H1 (cell line): ENCODE measurements at regions of chr16 and their contacts with region 1.

Region 1: GRCh38 chr16:19094541-19095365 is 19.0 kb upstream of the ITPRIPL2 start:
- DNase-seq: no peak
- H3K4me3 ChIP-seq: no peak overlapping the region
- H3K27ac ChIP-seq: no peak overlapping the region
- H3K4me1 ChIP-seq: no peaks in the 10 kb centered on the region
- H3K27me3 ChIP-seq: no peaks in the 10 kb centered on the region; a peak in 1 of 7 replicates
- CTCF ChIP-seq: peak in 1 of 3 experiments; percentile 11; a peak in 1 of 4 replicates
- EP300 ChIP-seq: no peak
- POLR2A ChIP-seq: no peak
- RAD21 ChIP-seq: no peak

Region 2: GRCh38 chr16:19033761-19034160 is 61.0 kb before region 1 on chr16:
- CTCF ChIA-PET with region 1: no interaction called
- POLR2A ChIA-PET with region 1: no interaction called
- DNase-seq: no peak
- H3K4me3 ChIP-seq: no peak overlapping the region
- H3K27ac ChIP-seq: no peak overlapping the region
- H3K4me1 ChIP-seq: no peaks in the 10 kb centered on the region
- H3K27me3 ChIP-seq: no peaks in the 10 kb centered on the region
- CTCF ChIP-seq: no peak
- EP300 ChIP-seq: no peak
- POLR2A ChIP-seq: no peak
- RAD21 ChIP-seq: no peak

Region 3: GRCh38 chr16:19062706-19063105 is 32.0 kb before region 1 on chr16:
- CTCF ChIA-PET with region 1: no interaction called
- POLR2A ChIA-PET with region 1: no interaction called
- DNase-seq: no peak
- H3K4me3 ChIP-seq: no peak overlapping the region
- H3K27ac ChIP-seq: no peak overlapping the region
- H3K4me1 ChIP-seq: no peaks in the 10 kb centered on the region
- H3K27me3 ChIP-seq: no peaks in the 10 kb centered on the region
- CTCF ChIP-seq: no peak
- EP300 ChIP-seq: no peak
- POLR2A ChIP-seq: no peak
- RAD21 ChIP-seq: no peak

Region 4: DNA sequence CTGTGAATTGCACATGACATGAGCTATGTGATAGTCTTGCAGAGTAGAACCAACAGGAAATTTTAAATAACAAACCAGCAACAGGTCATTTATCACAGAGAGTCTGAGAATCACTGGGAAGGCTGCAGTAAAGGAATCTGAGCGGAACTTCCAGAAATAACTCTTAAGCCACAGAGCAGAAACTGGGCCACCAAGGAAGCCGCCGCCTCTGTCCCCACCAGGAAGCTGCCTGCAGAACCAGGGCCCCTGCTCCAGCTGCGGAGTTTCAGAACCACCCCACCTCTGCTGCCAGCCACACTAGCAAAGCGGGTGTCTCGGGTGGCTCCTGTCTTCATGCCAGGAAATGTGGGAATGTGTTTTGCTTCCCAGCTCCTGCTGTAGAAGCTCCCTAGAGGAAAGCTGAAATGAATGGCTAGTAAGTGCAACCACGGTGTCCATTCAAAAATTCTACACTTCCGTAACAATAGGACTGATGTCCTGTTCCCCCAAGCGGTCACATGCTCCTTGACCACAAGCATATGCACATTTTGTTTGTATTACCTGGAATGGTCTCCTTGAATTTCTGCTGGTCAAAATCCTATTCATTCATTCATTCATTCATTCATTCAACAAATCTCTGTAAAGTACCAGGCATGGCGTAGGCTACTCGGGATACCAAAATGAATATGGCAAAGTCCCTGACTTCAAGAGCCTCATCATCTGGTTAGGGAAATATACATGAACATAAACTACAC is 11.3 kb after region 1 on chr16:
- CTCF ChIA-PET with region 1: interaction called, 27 read pairs
- POLR2A ChIA-PET with region 1: interaction called, 5 read pairs
- DNase-seq: no peak
- H3K4me3 ChIP-seq: no peak overlapping the region
- H3K27ac ChIP-seq: no peak overlapping the region
- H3K4me1 ChIP-seq: peaks cover 0 to 3% (median 0%) of the 10 kb centered on the region in 4 experiments; a peak in 1 of 7 replicates
- H3K27me3 ChIP-seq: no peaks in the 10 kb centered on the region
- CTCF ChIP-seq: no peak
- EP300 ChIP-seq: no peak
- POLR2A ChIP-seq: no peak
- RAD21 ChIP-seq: no peak